ENCODE measurements at regions of chr11 and their contacts with region 1.

Region 1: DNA sequence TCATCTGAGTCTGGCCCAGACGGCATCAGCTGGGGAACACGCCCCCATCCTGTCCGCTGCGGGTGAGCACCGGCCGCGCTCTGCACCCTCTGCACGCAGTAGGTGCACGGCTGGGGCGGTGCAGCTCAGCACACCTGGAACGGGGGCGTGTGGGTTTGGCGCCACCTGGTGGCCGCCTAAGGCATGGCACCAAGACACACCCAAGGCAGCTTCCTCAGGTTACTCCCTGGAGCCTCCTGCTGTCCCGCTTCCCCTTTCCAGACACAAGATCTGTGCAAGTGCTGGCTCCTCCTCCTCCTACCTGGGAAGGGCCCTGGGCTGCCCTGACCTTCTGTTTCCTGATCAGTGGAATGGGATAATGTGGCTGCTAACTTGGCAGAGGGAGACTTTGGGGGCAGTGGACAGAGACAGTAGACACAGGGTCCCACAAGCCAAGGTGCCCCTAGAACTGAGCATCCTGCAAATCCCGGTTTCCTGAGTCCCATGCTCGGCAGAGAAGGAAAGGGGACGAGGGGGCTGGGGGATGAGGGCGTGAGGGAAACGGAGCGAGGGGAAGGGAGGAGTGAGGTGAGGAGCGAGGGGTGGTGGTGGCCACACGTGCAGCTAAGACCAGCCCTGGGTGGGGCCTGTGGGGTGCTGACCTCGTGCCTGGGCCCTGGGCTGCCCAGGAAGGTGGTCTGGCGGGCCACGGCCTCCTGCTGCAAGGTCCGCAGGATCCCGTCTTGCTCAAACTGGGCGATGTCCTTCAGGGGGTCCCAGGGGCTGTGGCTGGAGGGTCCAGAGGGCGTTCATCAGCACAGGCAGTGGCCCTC is 34.8 kb upstream of the CARS1 start:
- DNase-seq: no peak
- H3K4me3 ChIP-seq: no peak overlapping the region
- H3K27me3 ChIP-seq: no peaks in the 10 kb centered on the region
- CTCF ChIP-seq: peak; percentile 97

Region 2: DNA sequence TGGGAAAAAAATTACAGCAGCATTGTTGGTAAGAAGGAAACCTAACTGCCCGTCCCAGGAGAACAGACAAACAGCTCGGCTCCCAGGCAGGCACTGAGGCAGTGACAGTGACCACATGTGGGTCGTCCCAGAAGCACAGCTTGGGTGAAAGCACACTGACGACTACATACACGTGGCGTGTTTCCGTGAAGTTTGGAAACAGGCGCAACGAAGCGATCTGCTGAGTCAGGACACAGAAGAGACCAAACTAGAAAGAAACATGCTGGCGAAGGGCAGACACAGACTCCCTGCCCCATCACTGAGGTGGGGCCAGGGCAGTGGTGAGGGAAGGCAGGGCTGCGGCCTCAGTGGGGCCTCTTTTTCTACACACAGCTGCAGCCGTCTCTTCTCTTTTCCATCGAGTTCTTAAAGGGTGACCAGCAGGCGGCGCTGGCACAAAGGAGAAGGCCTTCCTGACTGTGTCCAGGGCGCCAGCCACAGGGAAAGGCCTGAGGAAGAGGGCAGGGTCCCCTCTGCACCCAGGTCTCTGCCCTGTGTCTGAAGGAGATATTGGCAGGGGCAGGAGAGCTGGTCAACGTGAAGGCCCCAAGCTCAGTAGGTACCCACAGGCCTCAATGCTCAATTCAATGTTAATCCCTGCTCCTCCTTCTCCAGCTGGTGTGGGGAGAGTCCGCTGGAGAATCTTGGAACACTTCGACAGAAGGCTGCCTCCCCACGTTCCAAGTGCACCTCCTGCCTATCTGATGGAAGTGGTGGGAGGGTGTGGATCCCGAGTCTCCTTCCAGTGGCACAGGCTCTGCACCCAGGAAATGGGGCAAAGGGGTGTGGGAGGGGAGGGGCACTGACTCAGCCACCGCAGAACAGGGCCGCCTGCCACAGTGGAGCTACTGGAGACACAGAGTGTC is 54.7 kb before region 1 on chr11:
- CTCF ChIA-PET with region 1: interaction called, 155 read pairs
- POLR2A ChIA-PET with region 1: no interaction called
- DNase-seq: no peak
- H3K4me3 ChIP-seq: no peak overlapping the region
- H3K27me3 ChIP-seq: no peaks in the 10 kb centered on the region
- CTCF ChIP-seq: peak; percentile 82

Region 3: DNA sequence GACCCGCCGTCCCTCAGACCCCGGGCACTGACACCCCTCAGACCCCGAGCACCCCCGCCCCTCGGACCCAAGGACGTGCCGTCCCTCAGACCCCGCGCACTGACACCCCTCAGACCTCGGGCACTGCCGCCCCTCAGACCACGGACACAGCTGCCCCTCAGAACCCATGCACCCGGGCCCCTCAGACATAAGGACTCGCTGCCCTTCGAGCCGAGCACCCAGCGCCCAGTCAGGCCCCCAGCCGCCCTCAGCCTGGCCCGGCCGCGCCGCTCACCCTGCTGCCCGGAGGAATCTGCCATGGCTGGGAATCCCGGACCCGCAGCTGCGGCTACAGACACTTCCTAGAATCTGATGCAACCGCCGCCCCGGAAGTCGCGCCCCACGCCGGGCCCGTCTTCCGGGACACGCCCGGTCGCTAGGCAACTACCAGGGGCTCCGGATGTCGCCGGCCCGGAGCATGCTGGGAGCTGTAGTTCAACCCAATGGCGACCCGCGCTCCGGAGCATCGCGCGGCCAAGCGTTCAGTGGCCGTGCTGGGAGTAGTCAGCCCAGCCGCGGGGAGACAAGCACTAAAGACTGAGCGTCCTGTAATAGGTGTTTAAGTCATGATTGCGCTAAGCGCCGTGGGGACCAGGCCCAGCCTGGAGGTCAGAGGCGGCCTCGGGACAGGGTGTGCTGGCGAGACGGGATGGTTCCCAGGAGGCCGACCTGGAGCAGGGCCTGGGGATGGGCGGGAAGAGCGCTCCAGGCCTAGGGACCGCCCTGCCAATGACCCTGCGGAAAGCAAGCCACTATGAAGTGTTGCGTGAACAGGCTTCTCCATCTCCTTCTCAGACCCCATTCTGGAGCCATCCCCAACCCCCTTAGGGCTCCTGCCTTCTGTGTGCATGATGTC is 34.7 kb before region 1 on chr11 and contains the start of gene CARS1:
- CTCF ChIA-PET with region 1: interaction called, 54 read pairs
- POLR2A ChIA-PET with region 1: no interaction called
- DNase-seq: peak; percentile 70
- H3K4me3 ChIP-seq: peak within 1 kb of the TSS; percentile 100
- H3K27me3 ChIP-seq: no peaks in the 10 kb centered on the region
- CTCF ChIP-seq: no peak
- polyA plus RNA-seq, gene CARS1: 161 and 175 TPM in 2 replicates

Region 4: DNA sequence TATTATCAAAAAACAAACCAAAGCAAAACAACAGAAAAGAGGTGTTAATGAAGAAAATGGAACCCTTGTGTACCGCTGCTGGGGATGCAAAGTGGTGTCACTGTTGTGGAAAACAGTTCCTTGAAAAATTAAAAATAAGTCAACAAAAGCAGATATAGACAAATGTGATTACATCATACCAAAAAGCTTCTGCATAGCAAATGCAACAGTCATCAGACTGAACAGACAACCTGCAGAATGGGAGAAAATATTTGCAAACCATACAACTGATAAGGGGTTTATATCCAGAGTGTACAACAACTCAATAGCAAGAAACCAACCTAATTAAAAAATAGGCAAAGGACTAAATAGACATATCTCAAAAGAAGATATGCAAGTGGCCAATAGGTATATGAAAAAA is 11.9 kb before region 1 on chr11:
- CTCF ChIA-PET with region 1: interaction called, 22 read pairs
- POLR2A ChIA-PET with region 1: no interaction called
- DNase-seq: no peak
- H3K4me3 ChIP-seq: no peak overlapping the region
- H3K27me3 ChIP-seq: no peaks in the 10 kb centered on the region
- CTCF ChIP-seq: no peak

Region 5: DNA sequence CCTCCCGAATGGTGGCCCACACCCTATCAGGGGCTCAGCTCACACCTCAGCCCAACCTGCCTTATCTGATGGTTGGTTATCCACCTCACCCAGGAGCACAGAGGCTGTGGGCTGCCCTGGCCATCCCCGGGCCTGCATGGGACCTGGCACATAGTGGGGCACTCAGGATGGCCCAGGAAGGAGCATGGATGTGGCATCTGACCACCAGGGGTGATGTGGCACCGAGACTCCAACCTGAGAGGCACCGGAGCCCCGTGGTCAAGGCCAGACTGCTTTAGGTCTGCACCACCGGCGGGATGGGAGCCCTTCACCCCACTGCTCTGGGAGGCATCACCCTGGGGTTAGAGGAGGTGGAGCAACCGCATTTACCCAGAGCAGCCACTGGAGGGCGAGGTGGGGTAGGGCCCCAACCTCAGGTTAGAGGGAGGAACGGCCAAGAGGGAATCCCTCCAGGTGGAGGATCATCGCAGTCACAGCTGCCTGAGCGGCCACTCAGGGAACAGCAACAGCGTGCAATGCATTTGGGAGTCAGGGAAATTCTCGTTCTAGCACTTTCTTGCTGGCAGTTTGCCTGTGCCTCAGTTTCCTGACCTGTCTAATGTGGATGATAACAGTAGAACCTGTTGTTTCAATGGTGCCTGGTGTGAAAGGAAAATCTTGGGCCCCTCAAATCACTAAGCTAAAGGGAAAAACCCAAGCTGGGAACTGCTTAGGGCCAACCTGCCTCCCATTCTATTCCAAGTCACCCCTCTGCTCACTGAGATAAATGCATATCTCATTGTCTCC is 18.1 kb after region 1 on chr11:
- CTCF ChIA-PET with region 1: interaction called, 21 read pairs
- POLR2A ChIA-PET with region 1: no interaction called
- DNase-seq: no peak
- H3K4me3 ChIP-seq: no peak overlapping the region
- H3K27me3 ChIP-seq: no peaks in the 10 kb centered on the region
- CTCF ChIP-seq: peak; percentile 75

Region 6: DNA sequence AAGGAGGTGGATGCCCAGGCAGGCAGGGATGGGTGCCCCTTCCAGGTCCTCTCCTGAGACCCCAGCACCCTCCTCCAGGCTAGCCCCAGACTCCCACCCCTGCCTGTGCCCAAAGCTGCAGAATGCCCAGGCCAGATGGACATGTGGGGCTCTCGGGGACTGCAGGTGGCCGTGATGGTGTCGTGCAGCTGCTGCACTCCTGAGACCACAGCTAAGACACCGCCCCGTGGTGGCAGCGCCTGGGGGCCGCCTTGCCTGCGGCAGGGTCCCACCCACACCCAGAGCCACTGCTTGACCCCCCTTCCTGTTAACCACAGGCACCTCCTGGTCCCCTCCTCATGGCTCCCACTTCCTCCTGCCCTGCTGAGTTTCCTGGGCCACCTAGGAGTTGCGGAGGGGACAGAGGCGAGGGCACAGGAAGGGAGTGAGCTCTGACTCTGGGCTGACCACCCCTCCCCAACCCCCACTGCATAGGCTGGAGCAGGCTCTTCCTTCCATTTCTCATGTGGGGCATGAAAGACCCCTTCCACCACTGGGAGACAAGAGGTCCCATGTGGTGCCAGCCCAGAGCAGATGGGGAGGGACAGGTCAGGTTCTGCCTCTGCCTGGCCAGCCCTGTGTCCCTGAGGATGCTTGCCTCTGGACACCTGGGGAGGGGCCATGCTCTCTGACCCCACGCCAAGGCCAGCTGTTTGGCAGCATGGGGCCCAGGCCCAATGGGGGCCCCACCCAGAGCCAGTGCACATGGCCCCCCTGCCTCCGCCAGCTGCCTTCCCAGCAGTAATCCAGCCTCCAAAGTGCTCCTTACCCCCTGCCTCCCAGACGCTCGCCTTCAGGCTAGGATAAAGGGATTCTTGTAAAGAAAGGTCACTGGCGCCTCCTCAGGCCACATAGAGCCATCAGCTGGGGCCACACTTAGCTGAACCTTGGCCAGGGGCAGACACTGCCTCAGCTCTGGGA is 43.8 kb after region 1 on chr11:
- CTCF ChIA-PET with region 1: no interaction called
- POLR2A ChIA-PET with region 1: no interaction called
- DNase-seq: no peak
- H3K4me3 ChIP-seq: no peak overlapping the region
- H3K27me3 ChIP-seq: no peaks in the 10 kb centered on the region
- CTCF ChIP-seq: 0 out of 2 replicates have a peak, but pooled peaks have one; percentile 7